ENCODE measurements at regions of chr4 and their contacts with region 1.

Region 1: GRCh38 chr4:177250056-177250696 is 59.5 kb upstream of the NEIL3 start:
- DNase-seq: peak; percentile 65
- H3K4me3 ChIP-seq: no peak overlapping the region
- H3K27ac ChIP-seq: no peak overlapping the region
- H3K4me1 ChIP-seq: no peaks in the 10 kb centered on the region
- H3K27me3 ChIP-seq: no peaks in the 10 kb centered on the region
- CTCF ChIP-seq: peak; percentile 88

Region 2: DNA sequence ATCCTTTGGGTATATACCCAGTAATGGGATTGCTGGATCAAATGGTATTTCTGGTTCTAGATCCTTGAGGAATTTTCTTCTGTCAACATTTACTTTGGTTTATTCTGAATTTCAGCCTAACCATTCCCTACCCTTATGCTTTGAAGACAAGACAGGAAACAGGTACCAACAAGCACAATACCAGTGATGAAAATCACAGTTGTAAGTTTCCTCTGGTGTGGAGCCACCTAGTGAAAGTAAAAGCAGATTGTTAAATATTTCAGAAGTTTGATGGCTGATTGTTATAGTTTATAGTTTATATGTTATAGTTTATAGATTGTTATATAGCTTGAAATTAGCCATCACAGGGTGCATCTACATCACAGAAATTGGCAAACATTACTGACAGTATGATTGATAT is 296.6 kb after region 1 on chr4:
- intact Hi-C with region 1: loop called (anchors 10 kb)
- DNase-seq: no peak
- H3K4me3 ChIP-seq: no peak overlapping the region
- H3K27ac ChIP-seq: no peak overlapping the region
- H3K4me1 ChIP-seq: no peaks in the 10 kb centered on the region
- H3K27me3 ChIP-seq: no peaks in the 10 kb centered on the region
- CTCF ChIP-seq: no peak